ENCODE measurements at regions of chr21 and their contacts with region 1.

Region 1: DNA sequence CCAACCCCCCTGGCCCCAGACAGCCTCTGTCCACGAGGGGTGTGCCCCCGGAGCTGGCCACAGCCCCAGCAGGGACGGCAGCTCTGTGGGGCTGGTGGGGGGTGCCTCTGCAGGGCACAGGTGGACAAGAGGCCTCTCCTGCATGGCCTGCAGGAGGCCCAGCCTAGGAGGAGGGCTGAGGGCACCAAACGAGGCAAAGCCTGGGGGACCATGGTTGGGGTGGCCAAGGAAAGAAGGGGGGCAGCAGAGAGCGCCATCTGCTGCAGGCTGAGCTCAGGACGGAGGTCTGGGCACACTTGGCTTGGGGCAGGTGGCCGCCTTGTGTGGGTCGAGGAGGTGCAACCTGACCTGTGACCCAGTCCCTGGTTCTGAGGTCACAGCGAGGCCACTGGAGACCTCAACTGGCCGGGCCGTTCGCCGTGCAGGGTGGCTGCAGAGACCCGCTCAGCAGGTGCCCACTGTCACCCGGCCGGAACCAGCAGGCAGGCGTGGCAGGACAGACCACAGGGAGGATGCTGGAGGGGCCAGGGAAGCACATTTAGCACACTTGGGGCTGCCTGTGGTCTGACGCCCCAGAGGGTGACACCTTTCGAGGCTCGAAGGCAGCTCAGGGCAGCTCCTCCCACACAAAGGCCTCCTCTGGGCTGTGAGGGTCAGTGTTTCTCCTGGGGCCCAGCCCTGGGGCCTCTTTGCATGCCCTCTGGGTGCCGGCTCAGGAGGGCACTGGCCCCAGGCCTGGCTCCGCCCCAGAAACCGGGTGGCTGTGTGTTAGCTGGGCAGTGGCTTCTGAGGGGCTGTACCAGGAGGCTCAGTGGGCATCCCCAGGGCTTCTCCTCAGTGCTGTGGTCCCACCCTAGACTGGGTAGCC is 27.5 kb downstream of the RRP1 start:
- DNase-seq: no peak
- H3K4me3 ChIP-seq: no peak overlapping the region
- H3K27me3 ChIP-seq: peaks cover 3% of the 10 kb centered on the region; the same call in 1 of the 2 replicates
- CTCF ChIP-seq: no peak

Region 2: GRCh38 chr21:43975495-43975993 is 158.7 kb after region 1 on chr21:
- CTCF ChIA-PET with region 1: interaction called, 14 read pairs
- POLR2A ChIA-PET with region 1: no interaction called
- DNase-seq: no peak
- H3K4me3 ChIP-seq: no peak overlapping the region
- H3K27me3 ChIP-seq: no peaks in the 10 kb centered on the region
- CTCF ChIP-seq: peak; percentile 98

Measured in BJ (cell line).